ENCODE measurements at regions of chr10 and their contacts with region 1.

Region 1: GRCh38 chr10:80444646-80445319 is 9.3 kb upstream of the TSPAN14 start:
- DNase-seq: peak; percentile 47
- H3K4me3 Mint-ChIP-seq: no peak overlapping the region
- H3K27ac Mint-ChIP-seq: peak overlapping the region; percentile 49
- H3K4me1 Mint-ChIP-seq: peaks cover 53% of the 10 kb centered on the region
- H3K27me3 Mint-ChIP-seq: peaks cover 10% of the 10 kb centered on the region

Region 2: GRCh38 chr10:80382989-80383388 is 61.8 kb before region 1 on chr10:
- intact Hi-C with region 1: loop called (anchors 1 kb)
- DNase-seq: peak; percentile 31
- H3K4me3 Mint-ChIP-seq: no peak overlapping the region
- H3K27ac Mint-ChIP-seq: no peak overlapping the region
- H3K4me1 Mint-ChIP-seq: peaks cover 14% of the 10 kb centered on the region
- H3K27me3 Mint-ChIP-seq: no peaks in the 10 kb centered on the region

Region 3: DNA sequence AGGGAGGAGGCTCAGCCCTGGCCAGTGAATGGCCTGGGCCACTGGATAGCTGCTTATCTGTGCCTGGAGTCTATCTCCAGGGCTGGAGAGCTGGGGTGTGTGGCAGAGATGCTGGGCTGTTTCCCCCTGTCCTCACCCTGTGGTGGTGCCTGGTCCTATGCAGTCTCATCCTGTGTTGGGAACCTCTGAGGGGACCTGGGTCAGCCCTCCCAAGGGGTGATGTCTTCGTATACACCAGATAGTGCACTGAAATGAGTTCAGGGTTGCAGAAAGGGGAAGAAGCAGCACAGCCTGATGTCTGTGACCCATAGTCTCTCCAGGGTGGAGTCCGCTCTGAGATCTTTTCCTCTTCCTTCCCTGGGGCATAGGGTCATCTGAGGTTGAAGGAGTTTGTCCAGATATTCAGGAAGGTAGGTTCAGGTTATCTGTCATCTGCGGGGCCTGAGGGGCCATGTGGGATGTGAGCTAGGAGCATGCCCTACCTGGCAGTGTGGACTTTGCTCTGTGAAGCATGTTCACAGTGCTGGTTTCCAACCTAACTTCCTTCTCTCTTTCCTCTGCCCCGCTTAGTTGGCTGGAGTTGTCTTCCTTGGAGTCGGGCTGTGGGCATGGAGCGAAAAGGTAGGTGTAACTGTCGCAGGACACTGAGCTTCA is 59.5 kb after region 1 on chr10:
- intact Hi-C with region 1: loop called (anchors 1 kb)
- DNase-seq: no peak
- H3K4me3 Mint-ChIP-seq: no peak overlapping the region
- H3K27ac Mint-ChIP-seq: peak overlapping the region; percentile 86
- H3K4me1 Mint-ChIP-seq: peaks cover 67% of the 10 kb centered on the region
- H3K27me3 Mint-ChIP-seq: no peaks in the 10 kb centered on the region

Region 4: DNA sequence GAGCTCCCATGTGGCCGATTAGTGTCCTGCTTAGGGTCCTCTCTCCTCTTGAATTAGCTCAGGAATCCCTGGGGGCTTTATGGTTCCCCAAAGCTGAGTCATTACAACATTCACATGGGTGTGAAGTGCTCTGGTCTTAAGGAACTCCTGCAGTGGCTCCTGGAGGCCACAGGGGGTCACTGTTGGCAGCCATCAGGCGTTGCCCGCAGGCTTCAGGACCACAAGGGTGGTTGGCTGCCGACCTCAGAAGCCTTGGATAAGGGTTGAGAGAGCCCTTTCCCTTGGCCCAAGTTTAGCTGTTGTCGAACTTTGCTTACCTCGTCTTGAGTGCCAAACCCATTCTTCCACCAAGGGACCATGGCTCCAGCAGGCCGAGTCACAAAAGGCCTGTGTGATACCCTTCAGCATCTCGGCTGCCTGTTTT is 154.7 kb after region 1 on chr10:
- intact Hi-C with region 1: loop called (anchors 1 kb)
- DNase-seq: no peak
- H3K4me3 Mint-ChIP-seq: no peak overlapping the region
- H3K27ac Mint-ChIP-seq: no peak overlapping the region
- H3K4me1 Mint-ChIP-seq: no peaks in the 10 kb centered on the region
- H3K27me3 Mint-ChIP-seq: peaks cover 3% of the 10 kb centered on the region

Region 5: DNA sequence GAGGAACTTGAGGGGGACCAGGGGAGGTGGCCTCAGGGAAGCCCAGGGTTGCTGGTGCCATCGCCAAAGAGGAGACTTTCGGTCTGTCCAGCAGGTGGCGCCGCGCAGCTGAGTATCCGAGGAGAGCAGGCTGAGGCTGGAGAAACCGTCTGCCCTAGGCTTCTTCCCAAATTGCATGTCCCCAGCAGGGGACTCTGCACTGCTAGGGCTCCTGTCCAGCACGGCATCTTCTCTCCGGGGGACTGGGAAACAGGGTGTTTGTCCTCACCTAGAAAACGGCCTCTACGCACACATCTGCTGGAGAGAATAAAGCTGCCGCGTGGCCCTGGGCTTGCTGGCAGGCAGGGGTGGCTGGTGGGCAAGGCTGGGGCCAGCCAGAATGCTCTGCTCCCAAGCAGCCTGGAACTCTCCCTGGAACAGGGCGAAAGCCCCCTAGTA is 254.8 kb after region 1 on chr10:
- intact Hi-C with region 1: loop called (anchors 5 kb)
- DNase-seq: peak; percentile 44
- H3K4me3 Mint-ChIP-seq: no peak overlapping the region
- H3K27ac Mint-ChIP-seq: no peak overlapping the region
- H3K4me1 Mint-ChIP-seq: no peaks in the 10 kb centered on the region
- H3K27me3 Mint-ChIP-seq: no peaks in the 10 kb centered on the region

Region 6: GRCh38 chr10:81018708-81019365 is 574.1 kb after region 1 on chr10:
- intact Hi-C with region 1: loop called (anchors 5 kb)
- DNase-seq: no peak
- H3K4me3 Mint-ChIP-seq: no peak overlapping the region
- H3K27ac Mint-ChIP-seq: no peak overlapping the region
- H3K4me1 Mint-ChIP-seq: no peaks in the 10 kb centered on the region
- H3K27me3 Mint-ChIP-seq: peaks cover 2% of the 10 kb centered on the region